ENCODE measurements at regions of chr7 and their contacts with region 1.

Region 1: DNA sequence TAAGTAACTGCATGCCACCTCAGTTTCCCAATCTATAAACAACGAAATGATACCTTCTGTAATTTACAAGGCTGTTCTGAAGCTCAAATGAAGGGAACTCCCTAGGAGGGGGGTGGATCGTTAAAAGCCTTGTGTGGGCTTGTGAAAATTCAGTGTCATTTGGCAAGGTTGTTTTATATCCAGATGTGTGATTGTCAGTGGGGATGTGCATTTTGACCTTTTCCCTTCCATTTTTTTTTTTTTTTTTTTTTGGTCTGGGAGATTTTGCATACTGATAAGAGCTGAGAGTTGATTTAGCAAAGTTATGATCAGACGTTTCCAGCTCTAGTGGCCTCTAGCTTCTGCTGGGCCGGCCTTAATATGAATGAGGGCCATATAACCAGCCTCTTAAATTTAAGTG is 22.8 kb downstream of the CREB5 start:
- DNase-seq: no peak
- ATAC-seq: no peak
- H3K4me3 ChIP-seq: no peak overlapping the region
- H3K27ac ChIP-seq: no peak overlapping the region
- H3K4me1 ChIP-seq: no peaks in the 10 kb centered on the region
- H3K27me3 ChIP-seq: peaks cover 57% of the 10 kb centered on the region
- CTCF ChIP-seq: no peak

Region 2: DNA sequence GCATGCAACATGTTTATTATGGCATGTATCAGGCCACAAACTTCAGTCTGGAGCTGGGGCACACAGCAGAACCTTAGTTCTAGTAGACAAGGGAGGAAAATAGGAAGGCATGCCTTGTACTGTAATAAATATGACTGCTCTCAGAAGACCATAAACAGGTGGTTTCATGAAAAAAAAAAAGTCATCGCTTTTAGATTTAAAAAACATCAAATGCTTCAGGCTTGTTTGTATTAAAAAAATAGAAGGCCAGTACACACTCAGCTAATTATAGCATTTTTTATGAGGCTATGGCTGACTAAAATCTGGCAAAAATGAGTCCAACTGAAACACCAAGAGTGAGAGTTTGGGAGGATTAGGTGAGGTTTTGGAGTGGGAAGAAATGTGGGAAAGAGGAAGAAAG is 458.6 kb before region 1 on chr7:
- CTCF ChIA-PET with region 1: no interaction called
- POLR2A ChIA-PET with region 1: no interaction called
- in situ Hi-C with region 1: no loop called
- intact Hi-C with region 1: no loop called
- DNase-seq: no peak
- ATAC-seq: no peak
- H3K4me3 ChIP-seq: no peak overlapping the region
- H3K27ac ChIP-seq: no peak overlapping the region
- H3K4me1 ChIP-seq: no peaks in the 10 kb centered on the region
- H3K27me3 ChIP-seq: no peaks in the 10 kb centered on the region
- CTCF ChIP-seq: no peak

Region 3: GRCh38 chr7:28002638-28003037 is 432.5 kb before region 1 on chr7:
- CTCF ChIA-PET with region 1: no interaction called
- POLR2A ChIA-PET with region 1: no interaction called
- in situ Hi-C with region 1: no loop called
- intact Hi-C with region 1: no loop called
- DNase-seq: no peak
- ATAC-seq: no peak
- H3K4me3 ChIP-seq: no peak overlapping the region
- H3K27ac ChIP-seq: no peak overlapping the region
- H3K4me1 ChIP-seq: no peaks in the 10 kb centered on the region
- H3K27me3 ChIP-seq: no peaks in the 10 kb centered on the region
- CTCF ChIP-seq: no peak

Region 4: GRCh38 chr7:28369523-28369922 is 65.6 kb before region 1 on chr7:
- CTCF ChIA-PET with region 1: no interaction called
- POLR2A ChIA-PET with region 1: interaction called, 12 read pairs
- in situ Hi-C with region 1: no loop called
- intact Hi-C with region 1: no loop called
- DNase-seq: no peak
- ATAC-seq: no peak
- H3K4me3 ChIP-seq: no peak overlapping the region
- H3K27ac ChIP-seq: no peak overlapping the region
- H3K4me1 ChIP-seq: no peaks in the 10 kb centered on the region
- H3K27me3 ChIP-seq: peaks cover 6% of the 10 kb centered on the region
- CTCF ChIP-seq: no peak